WTC11 (cell line): ENCODE measurements at regions of chr19 and their contacts with region 1.

Region 1: DNA sequence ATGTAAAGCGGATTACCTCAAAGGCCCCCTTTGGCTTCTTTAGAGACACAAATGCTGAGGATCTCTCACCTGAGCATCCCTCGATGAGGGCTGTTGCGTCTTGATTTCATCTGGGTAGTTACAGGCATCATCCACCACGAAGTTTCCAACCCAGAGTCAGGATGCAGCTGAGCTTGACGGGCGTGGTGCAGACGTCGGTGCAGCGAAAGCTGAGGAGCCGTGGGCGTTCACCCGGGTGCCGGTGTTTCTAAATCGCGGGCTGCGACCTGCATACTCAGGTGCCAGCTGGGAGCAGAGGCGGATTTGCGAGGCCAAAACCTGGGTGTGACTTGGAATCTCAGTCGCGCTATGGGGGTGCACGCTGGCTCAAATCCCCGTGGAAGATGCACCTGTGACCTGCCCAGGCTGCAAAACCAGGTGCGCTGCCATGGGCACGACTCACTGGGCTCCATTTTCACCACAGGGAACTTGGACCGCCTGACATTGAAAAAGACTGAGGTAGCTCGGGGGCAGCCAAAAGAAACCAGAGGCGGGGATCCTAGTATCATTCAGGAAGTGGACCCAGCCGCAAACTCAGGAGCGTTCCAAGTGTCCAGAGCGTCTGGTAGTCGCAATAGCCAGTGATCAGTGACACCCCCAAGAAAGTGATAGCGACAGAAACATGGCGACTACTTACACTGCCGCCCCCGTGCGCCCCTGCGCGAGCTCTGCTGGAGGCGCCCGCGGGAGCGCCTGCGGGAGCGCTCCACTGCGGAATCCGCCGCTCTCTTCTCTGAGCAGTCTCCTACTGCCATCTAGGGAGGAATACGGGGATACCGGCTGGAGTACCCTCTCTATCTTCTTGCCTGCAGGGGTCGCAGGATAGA is 36.4 kb upstream of the IGFL4 start:
- DNase-seq: peak; percentile 83
- ATAC-seq: peak; percentile 91
- H3K4me3 Mint-ChIP-seq: peak overlapping the region; percentile 84
- H3K27ac Mint-ChIP-seq: no peak overlapping the region
- H3K4me1 Mint-ChIP-seq: peaks cover 2% of the 10 kb centered on the region
- H3K27me3 Mint-ChIP-seq: peaks cover 83% of the 10 kb centered on the region
- CTCF ChIP-seq: peak; percentile 75

Region 2: GRCh38 chr19:45913874-45914830 is 163.0 kb before region 1 on chr19 and contains the start of gene NANOS2:
- CTCF ChIA-PET with region 1: interaction called, 16 read pairs
- POLR2A ChIA-PET with region 1: no interaction called
- DNase-seq: peak; percentile 94
- ATAC-seq: peak; percentile 98
- H3K4me3 Mint-ChIP-seq: no peak within 1 kb of the TSS
- H3K27ac Mint-ChIP-seq: no peak within 1 kb of the TSS
- H3K4me1 Mint-ChIP-seq: no peaks in the 10 kb centered on the region
- H3K27me3 Mint-ChIP-seq: peaks cover 7% of the 10 kb centered on the region
- CTCF ChIP-seq: no peak
- total RNA-seq, gene NANOS2: 0.13 to 0.18 TPM in 2 of 3 replicates, not detected in the other

Region 3: DNA sequence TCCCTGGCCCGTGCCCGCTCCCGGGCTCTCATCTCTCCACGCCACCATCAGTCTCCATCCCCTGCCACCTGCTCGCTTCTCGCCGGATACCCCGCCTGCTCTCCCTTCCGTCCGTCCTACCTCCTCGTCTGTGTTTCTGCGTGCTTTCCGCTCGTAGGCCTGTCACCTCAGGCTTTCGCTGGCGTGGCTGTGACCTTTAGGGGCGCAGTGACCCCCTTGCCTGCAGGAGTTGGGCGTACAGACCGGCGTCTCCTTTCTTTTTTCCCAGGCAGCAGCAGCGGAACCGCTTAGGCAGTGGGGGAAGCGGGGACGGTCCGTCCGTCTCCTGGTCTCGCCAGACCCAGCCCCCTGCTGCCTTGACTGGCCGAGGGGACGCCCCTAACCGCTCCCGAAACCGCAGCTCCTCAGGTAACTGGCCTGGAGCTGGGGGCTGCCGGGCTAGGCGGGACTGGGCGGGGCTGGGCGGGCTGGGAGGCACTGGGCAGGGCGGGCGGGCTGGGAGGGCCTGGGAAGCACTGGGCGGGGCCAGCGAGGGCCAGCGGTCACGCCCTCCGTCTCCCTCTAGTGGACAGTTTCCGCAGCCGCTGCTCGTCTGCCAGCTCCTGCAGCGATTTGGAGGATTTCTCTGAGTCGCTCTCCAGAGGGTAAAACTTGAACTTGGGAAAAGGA is 60.6 kb before region 1 on chr19:
- CTCF ChIA-PET with region 1: interaction called, 64 read pairs
- POLR2A ChIA-PET with region 1: interaction called, 3 read pairs
- DNase-seq: peak; percentile 89
- ATAC-seq: peak; percentile 66
- H3K4me3 Mint-ChIP-seq: peak overlapping the region; percentile 87
- H3K27ac Mint-ChIP-seq: peak overlapping the region; percentile 45; the same call in 1 of the 2 replicates
- H3K4me1 Mint-ChIP-seq: peaks cover 21% of the 10 kb centered on the region
- H3K27me3 Mint-ChIP-seq: peaks cover 31% of the 10 kb centered on the region
- CTCF ChIP-seq: peak; percentile 81

Region 4: GRCh38 chr19:46049597-46049996 is 27.6 kb before region 1 on chr19:
- CTCF ChIA-PET with region 1: interaction called, 36 read pairs
- POLR2A ChIA-PET with region 1: no interaction called
- DNase-seq: peak; percentile 79
- ATAC-seq: peak; percentile 99
- H3K4me3 Mint-ChIP-seq: no peak overlapping the region
- H3K27ac Mint-ChIP-seq: no peak overlapping the region; the same call in 1 of the 2 replicates
- H3K4me1 Mint-ChIP-seq: no peaks in the 10 kb centered on the region
- H3K27me3 Mint-ChIP-seq: peaks cover 74% of the 10 kb centered on the region
- CTCF ChIP-seq: peak; percentile 37; the same call in 1 of the 2 replicates

Region 5: DNA sequence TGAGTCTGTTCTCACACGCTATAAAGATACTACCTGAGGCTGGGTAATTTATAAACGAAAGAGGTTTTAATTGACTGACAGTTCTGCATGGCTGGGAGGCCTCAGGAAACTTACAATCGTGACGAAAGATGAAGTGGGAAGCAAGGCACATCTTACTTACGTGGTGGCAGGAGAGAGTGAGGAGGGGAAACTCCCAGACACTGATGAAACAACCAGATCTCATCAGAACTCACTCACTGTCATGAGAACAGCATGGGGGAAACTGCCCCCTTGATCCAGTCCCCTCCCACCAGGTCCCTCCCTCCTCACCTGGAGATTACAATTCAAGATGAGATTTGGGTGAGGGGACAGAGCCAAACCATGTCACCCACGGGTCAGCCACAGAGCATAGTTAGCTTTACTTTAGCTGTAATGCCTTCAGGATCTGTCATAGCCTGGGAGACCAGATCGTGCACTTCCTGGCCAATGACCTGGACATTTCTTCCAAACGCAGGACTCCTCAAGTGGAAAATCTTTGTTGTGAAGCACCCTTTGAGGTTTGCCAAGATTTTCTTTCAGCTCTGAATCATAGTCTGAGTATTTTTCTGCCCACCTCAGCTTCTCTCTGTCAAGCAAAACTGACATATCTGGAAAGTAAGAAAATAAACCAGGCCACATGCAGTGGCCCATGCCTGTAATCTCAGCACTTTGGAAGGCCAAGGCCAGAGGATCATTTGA is 194.5 kb after region 1 on chr19:
- CTCF ChIA-PET with region 1: interaction called, 17 read pairs
- POLR2A ChIA-PET with region 1: no interaction called
- DNase-seq: no peak
- ATAC-seq: no peak
- H3K4me3 Mint-ChIP-seq: no peak overlapping the region
- H3K27ac Mint-ChIP-seq: peak overlapping the region; percentile 75
- H3K4me1 Mint-ChIP-seq: peaks cover 32% of the 10 kb centered on the region
- H3K27me3 Mint-ChIP-seq: no peaks in the 10 kb centered on the region; the same call in 1 of the 2 replicates
- CTCF ChIP-seq: no peak